Adrenal gland (tissue), 19 donors: ENCODE measurements at regions of chr17 and their contacts with region 1.

Region 1: DNA sequence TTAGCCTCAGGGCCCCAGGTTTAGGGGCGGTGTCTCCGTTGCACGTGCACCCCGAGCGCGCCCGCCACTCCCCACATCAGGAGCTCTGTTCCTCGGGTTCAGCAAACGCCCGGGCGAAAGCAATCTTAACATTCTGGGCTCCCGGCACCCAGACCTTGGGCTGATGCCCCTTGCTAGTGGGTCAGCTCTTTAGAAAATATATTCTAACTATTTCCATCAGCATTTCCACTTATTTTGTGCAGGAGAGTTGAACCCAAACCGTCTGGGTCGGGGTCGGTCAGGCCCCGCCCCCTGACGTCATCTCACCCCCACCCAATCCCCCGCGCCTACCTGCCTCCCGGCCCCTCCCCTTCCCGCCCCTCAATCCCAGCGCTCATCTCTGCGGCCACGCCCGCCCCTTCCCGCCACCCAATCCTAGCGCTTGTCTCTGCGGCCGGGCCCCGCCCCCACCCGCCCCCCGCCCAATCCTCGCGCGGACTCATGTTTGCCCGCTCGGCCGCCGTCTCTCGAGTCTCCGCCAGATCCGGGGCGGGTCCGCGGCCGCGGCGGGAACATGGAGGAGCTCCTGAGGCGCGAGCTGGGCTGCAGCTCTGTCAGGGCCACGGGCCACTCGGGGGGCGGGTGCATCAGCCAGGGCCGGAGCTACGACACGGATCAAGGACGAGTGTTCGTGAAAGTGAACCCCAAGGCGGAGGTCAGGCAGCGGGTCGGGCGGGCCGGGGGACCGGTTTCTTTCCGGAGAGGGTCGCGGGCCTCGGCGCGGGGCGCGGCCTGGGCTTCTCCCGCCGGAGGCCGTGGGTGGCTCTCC is at the start of gene FN3KRP:
- DNase-seq: peak; percentile 89 to 98 (median 96)
- H3K4me3 ChIP-seq: peak within 1 kb of the TSS; percentile 25 to 73 (median 64)
- H3K27ac ChIP-seq: peak within 1 kb of the TSS in 4 of 5 donors; percentile 40 to 66 (median 56)
- H3K4me1 ChIP-seq: peaks cover 9 to 18% of the 10 kb centered on the region in 2 donors
- H3K27me3 ChIP-seq: no peaks in the 10 kb centered on the region
- CTCF ChIP-seq: no peak
- POLR2A ChIP-seq: peak; percentile 35 to 57
- total RNA-seq, gene FN3KRP: 6.8 to 41.2 (median 25.1) TPM

Region 2: GRCh38 chr17:82623707-82624106 is 92.7 kb before region 1 on chr17:
- intact Hi-C with region 1: loop called in 1 of 2 experiments (anchors 10 kb)
- DNase-seq: no peak
- H3K4me3 ChIP-seq: no peak overlapping the region
- H3K27ac ChIP-seq: no peak overlapping the region
- H3K4me1 ChIP-seq: peaks cover 14 to 17% of the 10 kb centered on the region in 2 donors
- H3K27me3 ChIP-seq: no peaks in the 10 kb centered on the region
- CTCF ChIP-seq: no peak
- POLR2A ChIP-seq: no peak